ENCODE measurements at regions of chr3 and their contacts with region 1.

Region 1: DNA sequence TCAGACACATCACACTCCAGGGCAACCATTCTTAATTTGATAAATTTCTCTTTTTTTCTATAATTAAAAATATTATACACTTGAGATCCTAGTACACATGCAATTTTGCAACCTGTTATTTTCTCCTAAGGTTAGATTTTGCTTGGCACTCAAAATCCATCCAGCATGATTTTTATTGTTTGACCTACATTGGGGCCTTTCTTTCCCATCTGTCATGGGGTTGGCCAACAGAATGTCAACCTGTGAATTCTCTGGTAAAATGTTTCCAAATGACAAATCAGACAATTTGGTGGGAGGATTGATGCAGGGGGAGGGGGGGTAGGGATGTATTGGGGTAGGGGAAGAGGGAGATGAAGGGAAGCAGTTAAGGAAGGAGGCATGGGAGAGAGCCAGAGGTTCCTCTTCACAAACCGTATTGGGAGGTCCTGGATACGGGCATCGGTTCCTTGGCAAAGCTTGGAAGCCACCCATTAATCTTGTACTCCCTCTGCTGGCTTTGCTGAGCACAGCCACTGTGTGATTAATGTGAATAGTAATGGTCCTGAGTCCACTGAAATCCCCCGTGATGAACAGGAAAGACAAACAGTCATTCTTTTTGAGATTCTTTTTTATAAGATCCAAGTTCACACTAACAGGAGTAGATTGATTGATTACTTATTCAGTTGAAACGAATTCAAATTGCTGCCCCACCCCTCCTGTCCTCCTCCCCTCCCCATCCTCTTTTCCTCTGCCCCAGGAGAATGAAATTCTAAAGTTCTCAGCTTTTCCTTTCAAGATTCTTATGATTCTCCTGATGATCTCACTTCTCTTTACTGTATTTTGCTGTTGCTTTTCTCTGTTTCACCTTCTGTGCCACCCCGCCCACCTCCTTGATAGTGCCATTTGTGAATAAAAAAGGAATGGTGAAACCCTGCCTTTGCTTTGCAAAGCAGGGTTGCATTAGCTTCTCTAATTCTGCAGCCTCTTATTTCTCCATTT is 82.2 kb upstream of the SLC25A26 start:
- DNase-seq: peak; percentile 34
- ATAC-seq: peak; percentile 94

Region 2: GRCh38 chr3:65785065-65785645 is 353.5 kb before region 1 on chr3:
- intact Hi-C with region 1: loop called (anchors 5 kb)
- DNase-seq: no peak
- ATAC-seq: peak; percentile 54

Region 3: GRCh38 chr3:66038726-66039589 is 99.7 kb before region 1 on chr3 and contains the start of gene MAGI1:
- intact Hi-C with region 1: loop called (anchors 2 kb)
- DNase-seq: peak; percentile 92
- ATAC-seq: peak; percentile 90
- total RNA-seq, gene MAGI1: 37.5 TPM

Region 4: GRCh38 chr3:66280304-66280703 is 141.7 kb after region 1 on chr3:
- intact Hi-C with region 1: no loop called
- DNase-seq: no peak
- ATAC-seq: no peak